Ascending aorta (tissue), 2 donors: ENCODE measurements at regions of chr2 and their contacts with region 1.

Region 1: GRCh38 chr2:182291296-182291695 is 135.5 kb downstream of the PDE1A start:
- DNase-seq: no peak
- H3K4me3 ChIP-seq: no peak overlapping the region
- H3K27ac ChIP-seq: no peak overlapping the region
- H3K4me1 ChIP-seq: no peaks in the 10 kb centered on the region
- H3K27me3 ChIP-seq: no peaks in the 10 kb centered on the region
- CTCF ChIP-seq: no peak

Region 2: DNA sequence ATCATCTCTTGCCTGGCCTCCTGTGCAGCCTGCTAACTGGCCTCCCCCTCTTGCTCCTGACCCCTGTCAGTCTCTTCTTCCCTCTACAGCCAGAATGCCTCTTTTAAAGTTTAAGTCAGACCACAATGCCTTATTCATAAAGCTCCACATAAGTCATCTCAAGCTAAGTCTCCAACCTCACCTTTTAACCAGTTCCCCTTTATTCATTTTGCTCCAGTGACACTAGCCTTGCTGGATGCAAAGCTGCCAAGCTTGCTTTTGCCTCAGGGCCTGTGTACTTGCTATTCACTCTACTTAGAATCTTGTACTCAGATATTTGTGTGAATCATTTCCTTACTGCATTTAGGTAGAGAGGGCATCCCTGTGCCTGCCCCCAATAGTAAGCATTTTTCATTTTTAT is 45.3 kb before region 1 on chr2:
- intact Hi-C with region 1: loop called (anchors 5 kb)
- DNase-seq: no peak
- H3K4me3 ChIP-seq: no peak overlapping the region
- H3K27ac ChIP-seq: no peak overlapping the region
- H3K4me1 ChIP-seq: no peaks in the 10 kb centered on the region
- H3K27me3 ChIP-seq: no peaks in the 10 kb centered on the region
- CTCF ChIP-seq: no peak